Posterior cingulate gyrus (tissue), 11 donors: ENCODE measurements at regions of chr7 and their contacts with region 1.

Region 1: GRCh38 chr7:47979145-47979831 is at the start of gene HUS1:
- DNase-seq: peak; percentile 81 to 98 (median 88)

Region 2: DNA sequence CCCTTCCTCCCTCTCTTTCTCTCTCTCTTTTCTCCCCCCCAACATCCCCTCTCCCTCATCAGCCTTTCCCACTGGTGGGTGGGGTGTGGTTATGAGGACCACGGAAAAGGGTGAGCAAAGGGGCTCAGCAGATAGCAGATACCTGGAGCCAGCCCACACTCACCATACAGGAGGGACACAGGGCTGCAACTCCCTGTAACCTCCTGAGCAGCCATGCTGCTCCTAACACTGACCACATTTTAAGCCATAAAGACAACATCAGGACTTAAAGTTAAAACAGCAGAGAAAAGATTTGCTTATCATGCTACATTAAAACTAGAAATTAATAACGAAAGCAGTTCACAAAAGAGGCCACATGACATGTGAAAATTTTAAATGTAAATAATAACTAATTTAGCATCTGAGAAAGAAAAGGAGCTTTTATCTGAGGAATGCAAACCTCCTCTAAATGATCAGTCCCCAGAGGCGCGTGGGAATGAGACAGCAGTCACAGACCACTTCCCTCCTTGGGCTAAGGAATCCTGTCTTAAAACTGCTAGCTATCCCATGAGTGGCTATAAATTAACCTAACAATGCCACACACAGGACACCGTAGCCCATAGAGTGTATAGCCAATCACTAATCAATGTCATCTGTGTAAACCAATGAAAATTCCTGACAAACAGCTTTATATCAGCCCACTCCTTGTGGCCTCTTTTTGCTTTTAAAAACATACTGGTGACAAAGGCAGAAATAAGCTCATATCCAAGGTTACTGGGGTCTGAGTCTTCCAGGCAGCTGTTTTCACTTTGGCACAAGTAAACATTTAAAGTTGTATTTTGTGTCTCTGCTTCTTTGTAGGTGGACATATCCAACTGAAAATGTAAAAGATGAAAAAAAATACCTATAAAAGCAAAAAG is 64.3 kb before region 1 on chr7:
- intact Hi-C with region 1: loop called (anchors 10 kb)
- DNase-seq: no peak

Region 3: DNA sequence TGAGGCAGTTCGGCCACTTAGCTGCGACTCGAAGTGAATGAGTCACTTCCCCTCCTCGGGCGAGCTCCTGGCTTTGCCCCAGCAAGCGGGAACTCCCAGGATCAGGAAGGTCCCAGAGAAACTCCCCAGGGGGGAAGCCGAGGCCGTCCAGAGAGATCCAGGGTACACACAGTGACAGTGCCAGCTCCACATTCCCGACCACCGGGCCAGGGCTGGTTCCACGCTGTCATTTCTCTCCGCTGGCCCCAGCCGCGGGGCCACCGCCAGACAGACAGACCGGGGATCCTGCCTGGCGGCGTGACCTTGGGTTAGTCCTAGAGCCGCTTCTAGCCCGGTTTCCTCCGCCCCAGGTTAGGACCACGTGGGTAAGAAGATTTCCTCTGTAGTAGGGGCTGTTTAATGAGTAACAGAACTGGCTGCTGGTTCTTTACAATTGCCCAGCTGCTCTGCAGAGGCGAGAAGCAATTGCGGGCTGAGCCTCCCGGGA is 109.3 kb after region 1 on chr7:
- intact Hi-C with region 1: loop called (anchors 5 kb)
- DNase-seq: peak in 9 of 10 donors; percentile 26 to 92 (median 52)